Esophagus muscularis mucosa (tissue), 4 donors: ENCODE measurements at regions of chr4 and their contacts with region 1.

Region 1: DNA sequence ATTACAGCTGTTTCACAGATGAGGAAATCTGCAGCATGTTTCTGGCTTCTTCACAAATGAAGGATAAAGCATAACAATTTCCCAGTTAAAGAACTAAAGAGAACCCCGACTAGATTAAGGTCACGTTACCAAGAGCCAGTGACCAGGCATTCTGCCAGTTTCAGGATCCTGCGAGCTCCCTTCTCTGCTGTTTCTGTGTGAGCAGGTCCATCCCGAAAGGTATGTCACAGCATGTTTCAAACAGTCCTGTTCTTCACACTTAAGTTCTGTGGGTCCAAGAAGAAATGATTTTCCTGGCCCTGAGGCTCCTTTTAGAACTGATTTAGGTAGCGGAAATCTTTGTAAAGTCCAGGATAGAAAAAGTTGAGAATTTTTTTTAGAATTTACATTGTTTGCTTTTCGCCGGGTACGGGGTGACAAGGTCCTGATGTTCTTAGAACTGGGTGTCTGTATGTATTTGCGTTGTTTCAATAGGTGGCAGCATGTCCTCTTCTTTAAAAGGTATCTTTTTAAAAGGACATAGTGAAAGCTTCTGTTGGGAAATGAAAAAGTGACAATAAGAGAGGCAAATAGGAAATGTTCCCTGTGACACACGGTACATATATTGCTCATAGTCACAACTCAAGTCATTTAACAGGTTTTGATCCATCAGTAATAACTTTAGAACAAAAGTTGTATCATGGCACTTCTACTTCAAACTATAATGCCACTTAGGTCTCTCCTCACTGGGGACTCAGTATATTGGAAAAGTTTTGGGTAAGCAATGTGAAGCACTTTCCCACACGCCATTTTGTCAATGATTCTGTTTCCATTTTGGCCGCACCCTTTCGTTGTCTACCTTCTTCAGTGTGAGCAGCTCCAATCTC is 18.4 kb downstream of the IL21 start:
- DNase-seq: no peak
- H3K4me3 ChIP-seq: no peak overlapping the region
- H3K27ac ChIP-seq: no peak overlapping the region
- H3K4me1 ChIP-seq: peaks cover 0 to 4% (median 0%) of the 10 kb centered on the region in 4 donors
- H3K27me3 ChIP-seq: peaks cover 0 to 10% (median 0%) of the 10 kb centered on the region in 4 donors
- CTCF ChIP-seq: peak; percentile 27 to 49 (median 48)
- EP300 ChIP-seq: no peak
- POLR2A ChIP-seq: no peak

Region 2: DNA sequence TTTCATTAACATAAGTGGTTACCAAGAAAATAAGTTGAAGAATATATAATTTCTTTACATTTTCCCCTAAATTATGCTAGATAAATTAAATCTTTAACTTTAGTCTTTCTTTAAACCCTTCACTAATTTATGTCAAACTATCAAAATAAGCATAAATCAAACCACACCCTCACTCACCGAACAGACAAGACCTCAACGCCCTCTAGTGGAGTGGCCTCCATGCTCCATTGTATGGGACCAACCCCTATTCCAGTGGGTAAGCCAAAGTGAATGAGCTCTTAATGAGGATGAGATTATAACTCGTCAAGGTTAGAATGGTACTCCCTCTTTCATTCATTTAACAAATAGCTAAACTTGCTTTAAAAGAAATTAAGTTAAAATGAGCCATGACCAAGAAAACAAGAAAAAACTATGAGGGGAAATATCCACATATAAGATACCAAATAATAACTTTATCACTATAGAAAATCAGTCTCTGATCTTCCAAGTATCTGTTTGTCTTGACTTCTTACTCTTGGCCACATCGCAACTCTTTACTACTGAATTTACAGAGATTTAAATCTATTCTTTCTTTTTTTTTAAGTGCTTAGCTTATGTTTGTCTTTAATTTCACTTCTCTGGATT is 114.4 kb after region 1 on chr4:
- intact Hi-C with region 1: loop called (anchors 1 kb)
- DNase-seq: no peak
- H3K4me3 ChIP-seq: no peak overlapping the region
- H3K27ac ChIP-seq: no peak overlapping the region
- H3K4me1 ChIP-seq: no peaks in the 10 kb centered on the region
- H3K27me3 ChIP-seq: no peaks in the 10 kb centered on the region
- CTCF ChIP-seq: peak; percentile 64 to 79 (median 78)
- EP300 ChIP-seq: no peak
- POLR2A ChIP-seq: no peak

Region 3: GRCh38 chr4:123144616-123145015 is 542.1 kb after region 1 on chr4:
- intact Hi-C with region 1: no loop called
- DNase-seq: no peak
- H3K4me3 ChIP-seq: no peak overlapping the region
- H3K27ac ChIP-seq: no peak overlapping the region
- H3K4me1 ChIP-seq: no peaks in the 10 kb centered on the region
- H3K27me3 ChIP-seq: no peaks in the 10 kb centered on the region
- CTCF ChIP-seq: no peak
- EP300 ChIP-seq: no peak
- POLR2A ChIP-seq: no peak